Tibial artery (tissue), 4 donors: ENCODE measurements at regions of chr14 and their contacts with region 1.

Region 1: GRCh38 chr14:36465178-36465577 is 54.9 kb downstream of the NKX2-1 start:
- DNase-seq: no peak
- H3K4me3 ChIP-seq: no peak overlapping the region
- H3K27ac ChIP-seq: no peak overlapping the region
- H3K4me1 ChIP-seq: no peaks in the 10 kb centered on the region
- H3K27me3 ChIP-seq: no peaks in the 10 kb centered on the region
- CTCF ChIP-seq: no peak

Region 2: GRCh38 chr14:34926552-34926951 is 1538.6 kb before region 1 on chr14:
- intact Hi-C with region 1: loop called (anchors 5 kb)
- DNase-seq: no peak
- H3K4me3 ChIP-seq: no peak overlapping the region
- H3K27ac ChIP-seq: no peak overlapping the region
- H3K4me1 ChIP-seq: no peaks in the 10 kb centered on the region
- H3K27me3 ChIP-seq: no peaks in the 10 kb centered on the region
- CTCF ChIP-seq: no peak

Region 3: GRCh38 chr14:36420149-36420687 is 45.0 kb before region 1 on chr14:
- intact Hi-C with region 1: no loop called
- DNase-seq: no peak
- H3K4me3 ChIP-seq: no peak overlapping the region
- H3K27ac ChIP-seq: no peak overlapping the region
- H3K4me1 ChIP-seq: no peaks in the 10 kb centered on the region
- H3K27me3 ChIP-seq: no peaks in the 10 kb centered on the region
- CTCF ChIP-seq: no peak

Region 4: DNA sequence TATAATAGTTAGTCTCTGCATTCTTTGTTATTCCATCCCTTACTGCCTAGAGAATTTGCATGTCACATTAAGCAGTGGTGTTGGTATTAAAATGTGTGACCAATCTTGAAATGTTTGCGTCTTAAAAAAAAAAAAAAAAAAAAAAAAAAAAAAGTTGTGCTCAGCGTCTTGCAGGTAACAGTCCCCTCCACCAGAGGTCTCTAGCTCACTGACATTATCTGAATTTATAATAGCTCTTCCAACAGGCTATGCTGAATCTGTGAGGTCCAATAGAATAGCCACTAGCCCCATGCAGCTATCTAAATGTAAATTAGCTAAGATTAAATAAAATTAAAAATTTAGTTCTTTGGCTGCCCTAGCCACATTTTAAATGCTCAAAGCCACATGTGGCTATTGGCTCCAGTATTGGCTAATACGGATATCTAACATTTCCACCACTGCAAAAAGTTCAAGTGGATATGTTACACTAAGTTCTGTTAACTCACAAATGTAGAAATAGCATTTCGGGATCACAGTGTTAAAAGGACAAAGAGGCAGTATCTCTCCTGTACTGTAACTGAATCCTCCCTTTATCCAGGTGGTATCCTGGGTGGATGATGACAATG is 88.6 kb after region 1 on chr14:
- intact Hi-C with region 1: no loop called
- DNase-seq: no peak
- H3K4me3 ChIP-seq: no peak overlapping the region
- H3K27ac ChIP-seq: no peak overlapping the region
- H3K4me1 ChIP-seq: no peaks in the 10 kb centered on the region
- H3K27me3 ChIP-seq: peaks cover 0 to 10% of the 10 kb centered on the region in 2 donors
- CTCF ChIP-seq: peak; percentile 45 to 46

Region 5: DNA sequence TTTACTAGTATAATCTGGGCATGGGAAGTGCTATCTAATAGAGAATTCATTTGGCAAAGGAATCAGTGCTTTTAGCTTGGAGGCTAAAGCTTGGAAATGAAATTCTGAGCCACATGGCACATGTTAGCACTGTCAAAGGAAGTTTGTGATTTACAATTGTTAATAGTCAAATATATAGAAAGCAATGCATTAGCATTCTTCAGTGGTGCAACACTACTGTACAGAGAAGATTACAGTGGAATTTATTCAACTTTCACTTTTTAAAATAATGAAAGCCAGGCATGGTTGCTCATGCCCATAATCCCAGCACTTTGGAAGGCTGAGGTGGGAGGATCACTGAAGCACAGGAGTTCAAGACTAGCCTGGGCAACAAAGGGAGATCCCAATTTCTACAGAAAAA is 242.4 kb after region 1 on chr14:
- intact Hi-C with region 1: no loop called
- DNase-seq: no peak
- H3K4me3 ChIP-seq: no peak overlapping the region
- H3K27ac ChIP-seq: no peak overlapping the region
- H3K4me1 ChIP-seq: no peaks in the 10 kb centered on the region
- H3K27me3 ChIP-seq: no peaks in the 10 kb centered on the region
- CTCF ChIP-seq: no peak